Ovary (tissue), 10 donors: ENCODE measurements at regions of chr12 and their contacts with region 1.

Region 1: DNA sequence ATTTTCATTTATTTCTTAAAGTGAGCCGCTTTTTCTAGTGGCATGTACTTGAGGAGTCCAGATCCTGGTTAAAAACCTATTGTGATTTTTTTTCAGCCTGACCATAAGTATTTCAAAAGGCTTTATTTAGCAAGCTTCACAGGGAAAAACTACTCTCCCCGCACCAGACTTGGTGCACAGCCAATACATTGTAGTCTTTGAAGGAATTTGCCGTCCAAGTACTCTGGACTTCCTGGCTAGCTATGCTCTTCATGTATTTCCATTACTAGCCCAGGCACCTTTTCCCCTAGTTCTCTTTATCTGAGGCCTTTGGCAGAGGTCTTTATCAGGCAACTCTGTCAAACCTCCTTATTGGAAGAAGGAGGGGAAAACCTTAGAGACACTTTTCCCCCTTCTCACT is 234.7 kb downstream of the CCDC91 start:
- DNase-seq: peak in 4 of 5 donors; percentile 20 to 28 (median 21)
- H3K4me3 ChIP-seq: no peak overlapping the region
- H3K27ac ChIP-seq: no peak overlapping the region
- H3K4me1 ChIP-seq: no peaks in the 10 kb centered on the region
- H3K27me3 ChIP-seq: no peaks in the 10 kb centered on the region
- CTCF ChIP-seq: no peak
- EP300 ChIP-seq: no peak
- POLR2A ChIP-seq: no peak

Region 2: GRCh38 chr12:28369483-28369882 is 55.5 kb before region 1 on chr12:
- intact Hi-C with region 1: no loop called
- DNase-seq: no peak
- H3K4me3 ChIP-seq: no peak overlapping the region
- H3K27ac ChIP-seq: no peak overlapping the region
- H3K4me1 ChIP-seq: no peaks in the 10 kb centered on the region
- H3K27me3 ChIP-seq: no peaks in the 10 kb centered on the region
- CTCF ChIP-seq: no peak
- EP300 ChIP-seq: no peak
- POLR2A ChIP-seq: no peak

Region 3: GRCh38 chr12:29980304-29980703 is 1555.3 kb after region 1 on chr12:
- intact Hi-C with region 1: loop called in 1 of 4 experiments (anchors 5 kb)
- DNase-seq: no peak
- H3K4me3 ChIP-seq: no peak overlapping the region
- H3K27ac ChIP-seq: no peak overlapping the region
- H3K4me1 ChIP-seq: peaks cover 2% of the 10 kb centered on the region
- H3K27me3 ChIP-seq: no peaks in the 10 kb centered on the region
- CTCF ChIP-seq: no peak
- EP300 ChIP-seq: no peak
- POLR2A ChIP-seq: no peak